Endothelial cell of umbilical vein (primary cell): ENCODE measurements at regions of chr16 and their contacts with region 1.

Region 1: DNA sequence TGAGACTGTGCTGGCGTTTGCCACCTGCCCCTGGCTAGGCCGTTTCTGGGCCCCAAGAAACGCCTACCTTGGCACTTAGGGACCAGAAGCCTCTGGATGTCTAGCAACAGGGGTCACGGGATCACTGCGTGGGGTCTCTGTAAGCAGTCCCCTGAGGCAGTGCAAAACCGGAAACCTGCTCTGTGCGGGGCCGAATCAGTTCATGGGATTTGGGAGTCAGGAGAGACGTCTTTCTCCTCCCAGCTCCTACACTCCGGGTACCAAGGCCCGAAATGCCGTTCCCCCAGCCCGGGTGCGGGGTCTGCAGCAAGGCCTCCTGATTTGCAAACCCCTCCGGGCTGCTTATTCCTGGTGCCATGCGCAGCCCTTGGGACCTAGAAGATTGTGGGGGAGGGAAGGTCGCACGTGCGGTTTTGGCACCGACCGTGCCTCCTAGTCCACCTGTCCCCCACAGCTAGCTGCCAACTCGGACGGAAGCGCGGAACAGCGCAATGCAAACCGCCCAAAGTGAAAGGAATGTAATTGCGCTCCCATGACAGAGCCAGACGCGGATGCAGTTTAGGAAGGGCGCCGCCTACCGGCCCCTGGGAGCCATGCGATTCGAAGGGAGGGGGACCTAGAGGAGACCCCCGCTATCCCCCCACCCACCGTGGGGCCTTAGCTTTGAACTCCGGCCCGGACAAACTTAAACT is 6.5 kb downstream of the IRX5 start:
- DNase-seq: peak; percentile 24
- H3K4me3 ChIP-seq: no peak overlapping the region
- H3K27ac ChIP-seq: no peak overlapping the region
- H3K4me1 ChIP-seq: peaks cover 4% of the 10 kb centered on the region
- H3K27me3 ChIP-seq: peaks cover 87 to 95% of the 10 kb centered on the region in 2 experiments
- CTCF ChIP-seq: peak; percentile 61 to 66
- POLR2A ChIP-seq: no peak

Region 2: DNA sequence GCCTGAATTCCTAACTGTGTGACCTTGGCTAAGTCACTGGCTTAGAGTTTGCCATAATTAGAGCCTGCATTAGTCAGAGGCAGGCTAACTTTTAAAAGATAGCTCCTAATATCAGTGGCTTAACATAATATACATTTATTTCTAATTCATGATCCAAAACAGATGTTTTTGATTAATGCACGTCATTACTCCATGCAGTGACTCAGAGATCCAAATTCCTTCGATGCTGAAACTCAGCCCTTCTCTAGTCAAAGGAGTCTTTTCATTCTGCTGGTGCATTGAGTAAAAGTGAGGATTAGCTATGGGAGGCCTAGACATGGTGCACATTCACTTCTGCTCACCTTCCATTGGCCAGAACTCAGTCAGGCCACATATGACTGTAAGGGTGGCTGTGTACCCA is 700.4 kb before region 1 on chr16:
- CTCF ChIA-PET with region 1: no interaction called
- POLR2A ChIA-PET with region 1: no interaction called
- dilution Hi-C with region 1: no loop called
- intact Hi-C with region 1: no loop called
- DNase-seq: no peak
- H3K4me3 ChIP-seq: no peak overlapping the region
- H3K27ac ChIP-seq: no peak overlapping the region
- H3K4me1 ChIP-seq: no peaks in the 10 kb centered on the region
- H3K27me3 ChIP-seq: no peaks in the 10 kb centered on the region
- CTCF ChIP-seq: no peak
- POLR2A ChIP-seq: no peak

Region 3: DNA sequence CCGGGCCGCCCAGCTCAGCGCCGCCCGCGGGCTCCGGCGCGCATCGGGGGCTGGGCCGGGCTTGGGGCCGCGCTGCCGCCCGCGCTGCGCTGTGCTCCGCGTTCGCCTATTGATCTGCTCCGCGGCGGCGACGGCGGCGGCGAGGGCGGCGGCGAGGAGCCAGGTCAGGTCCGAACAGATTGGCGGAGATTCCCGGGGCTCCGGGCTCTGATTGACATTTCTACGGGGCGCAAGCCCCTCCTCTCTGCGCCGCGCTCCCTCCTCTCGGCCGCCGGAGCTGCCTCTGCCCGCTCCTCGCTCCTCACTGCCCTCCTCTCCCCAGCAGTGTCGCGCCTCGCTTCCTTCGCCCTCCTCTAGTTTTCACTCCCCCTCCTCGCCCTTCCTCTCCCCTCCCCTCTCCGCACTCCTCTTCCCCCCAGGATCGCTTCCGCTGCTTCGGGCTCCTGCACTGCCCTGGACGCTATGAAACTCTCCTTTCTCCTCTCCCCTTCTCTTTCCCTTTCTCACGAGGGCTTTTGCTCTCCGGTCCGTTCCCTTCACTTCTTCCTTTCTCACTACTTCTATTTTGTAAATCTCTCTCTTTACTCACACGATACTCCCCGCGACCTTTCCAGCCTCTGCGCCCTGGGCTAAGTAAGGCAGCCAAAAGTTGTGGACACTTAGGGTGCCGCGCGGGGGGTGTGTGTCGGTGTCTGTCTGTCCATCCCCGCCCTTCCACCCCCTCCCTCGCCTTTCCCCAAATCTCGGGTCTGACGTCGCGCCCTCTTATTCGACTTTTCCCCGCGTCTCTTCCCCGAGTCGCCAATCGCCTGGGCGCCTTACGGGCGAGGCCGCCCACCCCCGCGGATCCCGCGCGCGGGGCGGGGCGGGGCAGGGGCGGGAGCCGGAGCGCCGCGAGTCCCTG is 650.8 kb before region 1 on chr16 and contains the start of gene IRX3:
- CTCF ChIA-PET with region 1: no interaction called
- POLR2A ChIA-PET with region 1: no interaction called
- dilution Hi-C with region 1: no loop called
- intact Hi-C with region 1: loop called (anchors 2 kb)
- DNase-seq: peak; percentile 22
- H3K4me3 ChIP-seq: peak within 1 kb of the TSS; percentile 37 to 50 (median 42)
- H3K27ac ChIP-seq: no peak within 1 kb of the TSS
- H3K4me1 ChIP-seq: peaks cover 8% of the 10 kb centered on the region
- H3K27me3 ChIP-seq: peaks cover 76 to 94% of the 10 kb centered on the region in 2 experiments
- CTCF ChIP-seq: no peak
- POLR2A ChIP-seq: no peak
- total RNA-seq, gene IRX3: not detected in 2 replicates

Region 4: GRCh38 chr16:54921206-54921824 is 15.8 kb before region 1 on chr16:
- CTCF ChIA-PET with region 1: no interaction called
- POLR2A ChIA-PET with region 1: no interaction called
- dilution Hi-C with region 1: no loop called
- intact Hi-C with region 1: no loop called
- DNase-seq: no peak
- H3K4me3 ChIP-seq: no peak overlapping the region
- H3K27ac ChIP-seq: no peak overlapping the region
- H3K4me1 ChIP-seq: peaks cover 1% of the 10 kb centered on the region
- H3K27me3 ChIP-seq: peaks cover 3 to 8% of the 10 kb centered on the region in 2 experiments
- CTCF ChIP-seq: no peak
- POLR2A ChIP-seq: no peak